B cell (primary cell): ENCODE measurements at regions of chr3 and their contacts with region 1.

Region 1: DNA sequence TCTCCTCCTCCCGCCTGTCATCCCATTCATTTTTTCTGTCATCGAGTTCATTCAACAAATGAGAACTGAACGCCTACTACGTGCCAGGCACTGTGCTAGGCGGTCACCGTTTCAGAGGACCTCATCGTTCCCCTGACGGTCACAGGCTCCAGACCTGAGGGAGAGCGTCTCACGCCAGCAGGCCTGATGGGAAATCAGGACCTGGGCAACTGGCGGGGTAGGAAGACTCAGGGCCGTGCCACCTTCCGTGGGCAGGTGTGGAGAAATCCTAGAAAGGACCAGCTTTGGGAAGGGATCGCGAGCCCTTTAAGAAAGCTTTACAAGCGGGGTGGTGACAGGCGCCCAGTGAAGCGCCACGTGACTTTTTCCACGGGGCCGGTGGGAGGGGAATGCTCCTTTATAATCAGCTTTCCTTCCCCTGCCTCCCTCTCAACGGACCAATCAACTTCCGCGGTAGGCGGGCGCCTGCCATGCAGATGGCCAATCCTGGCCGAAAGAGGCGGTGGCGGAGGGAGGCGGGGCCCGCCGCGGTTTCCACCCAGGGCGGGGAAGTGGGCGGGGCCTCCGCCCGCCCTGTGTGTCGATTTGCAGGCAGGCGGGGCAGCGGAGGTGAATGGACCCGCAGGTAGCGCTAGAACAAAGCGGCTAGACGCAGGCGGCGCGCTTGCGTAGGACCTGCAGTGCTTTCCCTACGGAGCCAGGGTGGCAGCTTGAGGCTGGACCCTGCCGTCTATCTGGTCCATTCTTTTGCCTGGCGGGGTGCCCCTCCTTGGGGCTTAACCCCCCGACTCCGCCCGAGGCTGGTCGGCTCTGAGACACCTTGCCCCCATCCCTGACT is 816 bp upstream of the DUSP7 start:
- DNase-seq: peak; percentile 99
- ATAC-seq: peak; percentile 85
- H3K4me3 ChIP-seq: peak overlapping the region; percentile 38 to 88 (median 78)
- H3K4me3 Mint-ChIP-seq: peak overlapping the region; percentile 95
- H3K27ac ChIP-seq: peak overlapping the region; percentile 79 to 83
- H3K27ac Mint-ChIP-seq: peak overlapping the region; percentile 94
- H3K4me1 ChIP-seq: peaks cover 43 to 57% of the 10 kb centered on the region in 2 donors
- H3K4me1 Mint-ChIP-seq: peaks cover 53% of the 10 kb centered on the region
- H3K27me3 ChIP-seq: no peaks in the 10 kb centered on the region
- H3K27me3 Mint-ChIP-seq: no peaks in the 10 kb centered on the region
- CTCF ChIP-seq: no peak

Region 2: GRCh38 chr3:51908026-51908425 is 149.2 kb before region 1 on chr3:
- CTCF ChIA-PET with region 1: no interaction called
- POLR2A ChIA-PET with region 1: no interaction called
- intact Hi-C with region 1: no loop called
- DNase-seq: no peak
- ATAC-seq: no peak
- H3K4me3 ChIP-seq: no peak overlapping the region
- H3K4me3 Mint-ChIP-seq: no peak overlapping the region
- H3K27ac ChIP-seq: no peak overlapping the region
- H3K27ac Mint-ChIP-seq: no peak overlapping the region
- H3K4me1 ChIP-seq: no peaks in the 10 kb centered on the region
- H3K4me1 Mint-ChIP-seq: no peaks in the 10 kb centered on the region
- H3K27me3 ChIP-seq: peaks cover 0 to 3% (median 0%) of the 10 kb centered on the region in 4 experiments
- H3K27me3 Mint-ChIP-seq: peaks cover 35% of the 10 kb centered on the region
- CTCF ChIP-seq: no peak

Region 3: GRCh38 chr3:51974963-51975851 is 82.0 kb before region 1 on chr3 and contains the start of gene ABHD14A:
- CTCF ChIA-PET with region 1: no interaction called
- POLR2A ChIA-PET with region 1: no interaction called
- intact Hi-C with region 1: loop called (anchors 2 kb)
- DNase-seq: peak; percentile 85
- ATAC-seq: peak; percentile 78
- H3K4me3 ChIP-seq: peak within 1 kb of the TSS; percentile 71 to 98 (median 85)
- H3K4me3 Mint-ChIP-seq: peak within 1 kb of the TSS; percentile 100
- H3K27ac ChIP-seq: peak within 1 kb of the TSS; percentile 39 to 75
- H3K27ac Mint-ChIP-seq: peak within 1 kb of the TSS; percentile 95
- H3K4me1 ChIP-seq: peaks cover 14 to 23% of the 10 kb centered on the region in 2 donors
- H3K4me1 Mint-ChIP-seq: peaks cover 28% of the 10 kb centered on the region
- H3K27me3 ChIP-seq: no peaks in the 10 kb centered on the region
- H3K27me3 Mint-ChIP-seq: no peaks in the 10 kb centered on the region
- CTCF ChIP-seq: no peak
- total RNA-seq, gene ABHD14A: 11.9 and 14.0 TPM in 2 replicates

Region 4: DNA sequence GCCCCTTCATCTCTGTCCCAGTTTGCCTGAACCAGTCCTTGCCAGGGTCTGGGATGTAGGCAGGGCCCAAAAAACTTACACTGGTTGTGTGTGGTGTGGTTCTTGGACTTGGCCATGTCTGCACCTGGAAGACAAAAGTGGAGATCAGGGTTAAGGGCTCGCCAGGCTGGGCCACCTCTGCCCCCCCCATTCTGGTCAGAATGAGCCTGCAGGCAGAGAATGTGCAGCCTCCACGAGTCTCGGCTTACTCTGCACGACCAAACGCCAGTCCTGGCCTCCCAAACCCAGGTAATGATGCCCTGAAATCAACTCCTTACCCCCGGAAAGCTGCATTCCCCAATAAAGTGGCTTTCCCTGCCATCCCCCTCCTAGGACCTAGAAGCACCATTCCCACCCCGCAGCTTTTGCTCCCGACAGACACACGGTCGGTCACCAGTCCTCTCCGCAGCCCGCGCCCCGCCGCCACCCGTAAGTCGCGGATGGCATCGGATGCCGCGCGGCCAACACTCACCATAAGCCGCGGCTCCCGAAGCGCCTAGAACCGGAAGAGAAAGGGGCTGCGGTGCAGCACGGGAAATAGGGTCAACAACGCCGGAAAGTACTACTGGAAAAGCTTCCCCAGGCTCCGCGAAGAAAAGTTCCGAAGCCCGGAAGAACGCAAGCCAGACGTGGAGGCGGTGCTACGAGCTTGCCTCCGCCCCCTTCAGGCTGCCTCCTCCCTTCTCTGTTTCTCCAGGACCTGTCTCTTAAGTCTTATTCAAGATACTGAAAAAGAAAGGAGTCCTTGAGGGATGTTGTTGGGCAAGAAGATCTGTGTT is 61.6 kb before region 1 on chr3 and contains the start of gene RPL29:
- CTCF ChIA-PET with region 1: interaction called, 13 read pairs
- POLR2A ChIA-PET with region 1: interaction called, 10 read pairs
- intact Hi-C with region 1: loop called (anchors 1 kb)
- DNase-seq: peak; percentile 95
- ATAC-seq: peak; percentile 98
- H3K4me3 ChIP-seq: peak within 1 kb of the TSS; percentile 89 to 99 (median 94)
- H3K4me3 Mint-ChIP-seq: peak within 1 kb of the TSS; percentile 100
- H3K27ac ChIP-seq: peak within 1 kb of the TSS; percentile 87 to 91
- H3K27ac Mint-ChIP-seq: peak within 1 kb of the TSS; percentile 100
- H3K4me1 ChIP-seq: peaks cover 13 to 19% of the 10 kb centered on the region in 2 donors
- H3K4me1 Mint-ChIP-seq: peaks cover 33% of the 10 kb centered on the region
- H3K27me3 ChIP-seq: no peaks in the 10 kb centered on the region
- H3K27me3 Mint-ChIP-seq: peaks cover 6% of the 10 kb centered on the region
- CTCF ChIP-seq: no peak
- total RNA-seq, gene RPL29: 1,460 and 1,552 TPM in 2 replicates

Region 5: GRCh38 chr3:52036222-52036694 is 20.9 kb before region 1 on chr3:
- CTCF ChIA-PET with region 1: no interaction called
- POLR2A ChIA-PET with region 1: no interaction called
- intact Hi-C with region 1: no loop called
- DNase-seq: no peak
- ATAC-seq: peak; percentile 45
- H3K4me3 ChIP-seq: no peak overlapping the region
- H3K4me3 Mint-ChIP-seq: no peak overlapping the region
- H3K27ac ChIP-seq: no peak overlapping the region
- H3K27ac Mint-ChIP-seq: no peak overlapping the region
- H3K4me1 ChIP-seq: peaks cover 0 to 10% of the 10 kb centered on the region in 2 donors
- H3K4me1 Mint-ChIP-seq: peaks cover 5% of the 10 kb centered on the region
- H3K27me3 ChIP-seq: peaks cover 0 to 5% (median 3%) of the 10 kb centered on the region in 4 experiments
- H3K27me3 Mint-ChIP-seq: peaks cover 3% of the 10 kb centered on the region
- CTCF ChIP-seq: no peak

Region 6: GRCh38 chr3:52123106-52123725 is 66.0 kb after region 1 on chr3:
- CTCF ChIA-PET with region 1: interaction called, 15 read pairs
- POLR2A ChIA-PET with region 1: no interaction called
- intact Hi-C with region 1: loop called (anchors 2 kb)
- DNase-seq: peak; percentile 76
- ATAC-seq: peak; percentile 73
- H3K4me3 ChIP-seq: peak overlapping the region in 1 of 5 experiments; percentile 27
- H3K4me3 Mint-ChIP-seq: no peak overlapping the region
- H3K27ac ChIP-seq: peak overlapping the region; percentile 49 to 81
- H3K27ac Mint-ChIP-seq: peak overlapping the region; percentile 90
- H3K4me1 ChIP-seq: peaks cover 34 to 35% of the 10 kb centered on the region in 2 donors
- H3K4me1 Mint-ChIP-seq: peaks cover 33% of the 10 kb centered on the region
- H3K27me3 ChIP-seq: no peaks in the 10 kb centered on the region
- H3K27me3 Mint-ChIP-seq: no peaks in the 10 kb centered on the region
- CTCF ChIP-seq: peak; percentile 84

Region 7: GRCh38 chr3:52154117-52155094 is 97.2 kb after region 1 on chr3 and contains the start of gene POC1A:
- CTCF ChIA-PET with region 1: interaction called, 6 read pairs
- POLR2A ChIA-PET with region 1: interaction called, 9 read pairs
- intact Hi-C with region 1: loop called (anchors 1 kb)
- DNase-seq: peak; percentile 91
- ATAC-seq: peak; percentile 85
- H3K4me3 ChIP-seq: peak within 1 kb of the TSS; percentile 73 to 93 (median 92)
- H3K4me3 Mint-ChIP-seq: peak within 1 kb of the TSS; percentile 98
- H3K27ac ChIP-seq: peak within 1 kb of the TSS; percentile 79 to 81
- H3K27ac Mint-ChIP-seq: peak within 1 kb of the TSS; percentile 98
- H3K4me1 ChIP-seq: peaks cover 4 to 15% of the 10 kb centered on the region in 2 donors
- H3K4me1 Mint-ChIP-seq: peaks cover 14% of the 10 kb centered on the region
- H3K27me3 ChIP-seq: no peaks in the 10 kb centered on the region
- H3K27me3 Mint-ChIP-seq: no peaks in the 10 kb centered on the region
- CTCF ChIP-seq: peak; percentile 13
- total RNA-seq, gene POC1A: 2.4 and 2.8 TPM in 2 replicates

Region 8: DNA sequence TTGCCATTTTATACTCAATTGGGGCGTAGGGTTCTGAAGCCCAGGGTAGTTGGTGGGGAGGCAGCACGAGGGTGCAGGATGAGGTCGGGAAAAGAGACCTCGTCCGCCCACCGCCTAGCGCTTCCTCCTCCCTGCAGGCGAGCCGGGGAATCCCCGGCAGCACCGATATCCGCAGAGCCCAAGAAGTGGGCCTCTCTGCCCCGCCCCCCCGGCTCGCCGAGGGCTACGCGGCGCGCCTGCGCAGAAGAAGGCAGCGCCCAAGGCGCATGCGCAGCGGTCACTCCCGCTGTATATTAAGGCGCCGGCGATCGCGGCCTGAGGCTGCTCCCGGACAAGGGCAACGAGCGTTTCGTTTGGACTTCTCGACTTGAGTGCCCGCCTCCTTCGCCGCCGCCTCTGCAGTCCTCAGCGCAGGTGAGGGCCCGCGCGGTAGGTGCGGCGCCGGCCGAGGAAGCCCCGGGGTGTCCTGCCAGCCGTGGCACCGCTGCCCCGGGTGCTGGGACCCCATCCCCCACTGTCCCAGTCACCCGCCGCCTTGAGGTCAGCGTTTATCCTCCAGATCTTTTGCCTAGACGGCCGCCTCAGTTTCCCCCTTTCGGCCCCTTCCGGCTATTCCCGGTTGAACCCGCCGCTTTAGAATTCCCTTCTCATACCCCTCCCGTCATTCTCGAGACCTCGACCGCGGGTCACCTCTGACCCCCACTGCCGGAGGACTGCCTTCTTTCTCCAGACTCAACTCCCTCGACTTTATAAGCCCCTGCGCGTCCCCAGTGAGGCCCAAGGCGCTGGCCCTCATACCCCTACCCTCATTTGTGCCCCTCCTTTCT is 140.9 kb after region 1 on chr3 and contains the start of gene ALAS1:
- CTCF ChIA-PET with region 1: no interaction called
- POLR2A ChIA-PET with region 1: no interaction called
- intact Hi-C with region 1: no loop called
- DNase-seq: peak; percentile 96
- ATAC-seq: peak; percentile 96
- H3K4me3 ChIP-seq: peak within 1 kb of the TSS; percentile 9 to 90 (median 86)
- H3K4me3 Mint-ChIP-seq: peak within 1 kb of the TSS; percentile 92
- H3K27ac ChIP-seq: peak within 1 kb of the TSS; percentile 41 to 79
- H3K27ac Mint-ChIP-seq: peak within 1 kb of the TSS; percentile 90
- H3K4me1 ChIP-seq: peaks cover 19 to 33% of the 10 kb centered on the region in 2 donors
- H3K4me1 Mint-ChIP-seq: peaks cover 42% of the 10 kb centered on the region
- H3K27me3 ChIP-seq: no peaks in the 10 kb centered on the region
- H3K27me3 Mint-ChIP-seq: no peaks in the 10 kb centered on the region
- CTCF ChIP-seq: no peak
- total RNA-seq, gene ALAS1: 26.1 and 28.3 TPM in 2 replicates

Region 9: GRCh38 chr3:52245322-52246263 is 188.4 kb after region 1 on chr3 and contains the start of gene PPM1M:
- CTCF ChIA-PET with region 1: no interaction called
- POLR2A ChIA-PET with region 1: no interaction called
- intact Hi-C with region 1: no loop called
- DNase-seq: peak; percentile 71
- ATAC-seq: peak; percentile 64
- H3K4me3 ChIP-seq: peak within 1 kb of the TSS; percentile 36 to 85 (median 76)
- H3K4me3 Mint-ChIP-seq: peak within 1 kb of the TSS; percentile 87
- H3K27ac ChIP-seq: peak within 1 kb of the TSS; percentile 71 to 83
- H3K27ac Mint-ChIP-seq: peak within 1 kb of the TSS; percentile 96
- H3K4me1 ChIP-seq: peaks cover 36 to 42% of the 10 kb centered on the region in 2 donors
- H3K4me1 Mint-ChIP-seq: peaks cover 55% of the 10 kb centered on the region
- H3K27me3 ChIP-seq: no peaks in the 10 kb centered on the region
- H3K27me3 Mint-ChIP-seq: no peaks in the 10 kb centered on the region
- CTCF ChIP-seq: no peak
- total RNA-seq, gene PPM1M: 45.0 and 53.6 TPM in 2 replicates

Region 10: GRCh38 chr3:52291508-52292181 is 234.5 kb after region 1 on chr3:
- CTCF ChIA-PET with region 1: interaction called, 3 read pairs
- POLR2A ChIA-PET with region 1: no interaction called
- intact Hi-C with region 1: loop called (anchors 2 kb)
- DNase-seq: peak; percentile 65
- ATAC-seq: peak; percentile 31
- H3K4me3 ChIP-seq: no peak overlapping the region
- H3K4me3 Mint-ChIP-seq: peak overlapping the region; percentile 37
- H3K27ac ChIP-seq: no peak overlapping the region
- H3K27ac Mint-ChIP-seq: peak overlapping the region; percentile 33
- H3K4me1 ChIP-seq: peaks cover 12 to 15% of the 10 kb centered on the region in 2 donors
- H3K4me1 Mint-ChIP-seq: peaks cover 30% of the 10 kb centered on the region
- H3K27me3 ChIP-seq: no peaks in the 10 kb centered on the region
- H3K27me3 Mint-ChIP-seq: no peaks in the 10 kb centered on the region
- CTCF ChIP-seq: peak; percentile 69